PC-9 (cell line): ENCODE measurements at regions of chr2 and their contacts with region 1.

Region 1: GRCh38 chr2:234500394-234501006 is 3.6 kb upstream of the ARL4C start:
- DNase-seq: peak; percentile 46 to 57
- H3K4me3 ChIP-seq: no peak overlapping the region
- H3K27ac ChIP-seq: no peak overlapping the region
- H3K4me1 ChIP-seq: peaks cover 17% of the 10 kb centered on the region
- H3K27me3 ChIP-seq: no peaks in the 10 kb centered on the region
- CTCF ChIP-seq: peak; percentile 70

Region 2: GRCh38 chr2:233854241-233854981 is 646.1 kb before region 1 on chr2 and contains the start of gene HJURP:
- CTCF ChIA-PET with region 1: no interaction called
- POLR2A ChIA-PET with region 1: interaction called, 10 read pairs
- intact Hi-C with region 1: loop called (anchors 5 kb)
- DNase-seq: peak; percentile 95 to 98
- H3K4me3 ChIP-seq: peak within 1 kb of the TSS; percentile 100
- H3K27ac ChIP-seq: peak within 1 kb of the TSS; percentile 21; the same call in 1 of the 2 replicates
- H3K4me1 ChIP-seq: peaks cover 32% of the 10 kb centered on the region
- H3K27me3 ChIP-seq: no peaks in the 10 kb centered on the region
- CTCF ChIP-seq: no peak
- total RNA-seq, gene HJURP: 109 TPM in 2 replicates

Region 3: GRCh38 chr2:234051374-234052070 is 449.0 kb before region 1 on chr2:
- CTCF ChIA-PET with region 1: no interaction called
- POLR2A ChIA-PET with region 1: no interaction called
- intact Hi-C with region 1: no loop called
- DNase-seq: no peak
- H3K4me3 ChIP-seq: no peak overlapping the region
- H3K27ac ChIP-seq: no peak overlapping the region
- H3K4me1 ChIP-seq: no peaks in the 10 kb centered on the region
- H3K27me3 ChIP-seq: no peaks in the 10 kb centered on the region
- CTCF ChIP-seq: no peak

Region 4: DNA sequence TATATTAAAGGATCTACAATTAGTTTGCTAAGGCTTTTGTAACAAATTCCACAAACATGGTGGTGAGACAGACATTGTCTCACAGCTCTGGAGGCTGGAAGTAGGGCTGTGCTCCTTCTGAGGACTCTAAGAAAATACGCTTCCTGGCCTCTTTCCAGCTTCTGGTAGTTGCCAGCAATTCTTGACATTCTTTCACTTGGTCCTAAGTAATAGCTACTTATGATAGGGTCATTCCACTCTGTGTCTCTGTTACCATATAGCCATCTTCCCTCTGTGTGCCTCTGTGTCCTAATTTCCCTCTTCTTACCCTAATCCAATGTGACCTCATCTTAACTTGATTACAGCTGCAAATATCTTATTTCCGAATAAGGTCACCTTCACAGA is 331.3 kb before region 1 on chr2:
- CTCF ChIA-PET with region 1: interaction called, 10 read pairs
- POLR2A ChIA-PET with region 1: no interaction called
- intact Hi-C with region 1: no loop called
- DNase-seq: peak; percentile 60 to 79
- H3K4me3 ChIP-seq: no peak overlapping the region
- H3K27ac ChIP-seq: no peak overlapping the region
- H3K4me1 ChIP-seq: peaks cover 31% of the 10 kb centered on the region
- H3K27me3 ChIP-seq: no peaks in the 10 kb centered on the region
- CTCF ChIP-seq: no peak

Region 5: DNA sequence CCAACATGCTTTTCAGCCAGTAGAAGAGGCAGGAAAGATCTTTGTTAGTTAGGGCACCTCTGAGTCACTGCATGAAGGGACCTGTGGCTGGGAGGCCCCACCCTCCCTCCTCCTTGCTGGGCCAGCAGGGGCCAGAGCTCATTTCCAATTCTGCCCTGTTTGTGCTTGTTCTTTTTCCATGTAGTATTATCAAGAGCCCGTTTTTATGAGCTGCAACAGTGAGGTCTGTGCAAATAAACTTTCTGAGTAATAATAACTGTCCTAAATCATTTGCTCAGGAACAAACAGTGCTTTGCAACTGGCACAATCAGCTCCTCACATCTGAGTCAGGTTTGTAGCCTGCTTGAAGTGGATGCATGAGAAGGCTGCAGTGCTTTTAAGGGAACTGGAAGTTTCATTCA is 131.6 kb before region 1 on chr2:
- CTCF ChIA-PET with region 1: interaction called, 7 read pairs
- POLR2A ChIA-PET with region 1: interaction called, 10 read pairs
- intact Hi-C with region 1: no loop called
- DNase-seq: peak; percentile 61 to 82
- H3K4me3 ChIP-seq: no peak overlapping the region
- H3K27ac ChIP-seq: peak overlapping the region; percentile 78
- H3K4me1 ChIP-seq: peaks cover 96% of the 10 kb centered on the region
- H3K27me3 ChIP-seq: no peaks in the 10 kb centered on the region
- CTCF ChIP-seq: 0 out of 2 replicates have a peak, but pooled peaks have one; percentile 14

Region 6: DNA sequence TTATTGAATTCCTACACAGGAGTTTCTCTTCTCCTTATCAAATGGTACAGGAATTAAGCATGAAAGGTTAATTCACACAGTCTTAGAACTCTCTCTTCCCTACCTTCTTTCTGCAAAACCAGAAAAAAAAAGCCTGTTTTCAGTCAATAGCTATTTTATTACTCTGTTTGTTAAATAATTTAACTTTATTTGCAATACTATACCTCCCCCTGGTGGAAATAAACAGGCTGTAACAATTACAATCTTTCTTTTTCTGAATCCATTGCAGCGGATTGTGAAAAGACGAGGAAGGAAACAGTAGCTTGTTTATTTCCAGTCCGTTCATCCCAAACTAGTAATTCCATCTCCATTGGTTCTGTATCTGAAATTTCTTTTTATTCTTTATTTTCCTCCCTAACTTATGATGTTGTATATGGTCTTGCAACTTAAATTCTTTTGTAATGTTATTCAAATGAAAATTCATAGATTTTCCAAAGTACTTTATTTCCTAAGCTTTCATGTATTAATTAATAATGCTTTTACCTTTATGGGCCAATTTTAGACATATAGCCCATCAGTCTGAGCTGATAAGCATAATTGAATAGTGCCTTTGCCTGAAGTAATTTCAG is 616.5 kb after region 1 on chr2:
- CTCF ChIA-PET with region 1: interaction called, 8 read pairs
- POLR2A ChIA-PET with region 1: no interaction called
- intact Hi-C with region 1: loop called (anchors 2 kb)
- DNase-seq: peak in 1 of 2 experiments; percentile 55
- H3K4me3 ChIP-seq: no peak overlapping the region
- H3K27ac ChIP-seq: no peak overlapping the region
- H3K4me1 ChIP-seq: no peaks in the 10 kb centered on the region; the same call in 1 of the 2 replicates
- H3K27me3 ChIP-seq: no peaks in the 10 kb centered on the region
- CTCF ChIP-seq: peak; percentile 92